Transverse colon (tissue), 4 donors: ENCODE measurements at regions of chr4 and their contacts with region 1.

Region 1: DNA sequence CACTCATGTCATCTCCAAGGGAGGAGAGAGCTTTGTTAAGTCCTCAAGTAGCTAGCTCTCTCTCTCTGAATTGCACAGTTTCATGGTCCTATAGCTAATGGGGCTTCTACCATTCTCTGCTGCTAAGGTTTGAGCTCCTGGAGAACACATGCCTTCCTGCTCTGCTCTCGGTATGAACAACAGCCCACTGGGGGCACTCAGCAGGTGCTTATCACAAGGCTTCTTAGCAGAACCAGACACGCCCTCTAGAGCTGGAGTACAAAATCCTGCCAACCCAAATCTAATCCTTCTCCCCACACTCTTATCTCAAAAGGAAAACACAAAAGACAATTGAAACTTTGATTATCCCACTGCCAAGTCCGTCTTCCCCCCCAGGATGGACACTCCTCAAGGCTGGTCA is 176.5 kb downstream of the HS3ST1 start:
- DNase-seq: no peak
- H3K4me3 ChIP-seq: no peak overlapping the region
- H3K27ac ChIP-seq: no peak overlapping the region
- H3K4me1 ChIP-seq: no peaks in the 10 kb centered on the region
- H3K27me3 ChIP-seq: no peaks in the 10 kb centered on the region
- CTCF ChIP-seq: no peak
- EP300 ChIP-seq: no peak
- POLR2A ChIP-seq: no peak

Region 2: GRCh38 chr4:11149612-11150259 is 102.4 kb before region 1 on chr4:
- in situ Hi-C with region 1: loop called in 1 of 4 experiments (anchors 25 kb)
- intact Hi-C with region 1: no loop called
- DNase-seq: no peak
- H3K4me3 ChIP-seq: no peak overlapping the region
- H3K27ac ChIP-seq: no peak overlapping the region
- H3K4me1 ChIP-seq: peaks cover 0 to 11% (median 3%) of the 10 kb centered on the region in 4 donors
- H3K27me3 ChIP-seq: no peaks in the 10 kb centered on the region
- CTCF ChIP-seq: no peak
- EP300 ChIP-seq: no peak
- POLR2A ChIP-seq: no peak